Dendritic cell treated with granulocyte-macrophage colony-stimulating factor and Interleukin-4, amounts not matched to agents 40 ng/mL and 50 ng/mL, for 4 days (primary cell): ENCODE measurements at regions of chr11 and their contacts with region 1.

Region 1: DNA sequence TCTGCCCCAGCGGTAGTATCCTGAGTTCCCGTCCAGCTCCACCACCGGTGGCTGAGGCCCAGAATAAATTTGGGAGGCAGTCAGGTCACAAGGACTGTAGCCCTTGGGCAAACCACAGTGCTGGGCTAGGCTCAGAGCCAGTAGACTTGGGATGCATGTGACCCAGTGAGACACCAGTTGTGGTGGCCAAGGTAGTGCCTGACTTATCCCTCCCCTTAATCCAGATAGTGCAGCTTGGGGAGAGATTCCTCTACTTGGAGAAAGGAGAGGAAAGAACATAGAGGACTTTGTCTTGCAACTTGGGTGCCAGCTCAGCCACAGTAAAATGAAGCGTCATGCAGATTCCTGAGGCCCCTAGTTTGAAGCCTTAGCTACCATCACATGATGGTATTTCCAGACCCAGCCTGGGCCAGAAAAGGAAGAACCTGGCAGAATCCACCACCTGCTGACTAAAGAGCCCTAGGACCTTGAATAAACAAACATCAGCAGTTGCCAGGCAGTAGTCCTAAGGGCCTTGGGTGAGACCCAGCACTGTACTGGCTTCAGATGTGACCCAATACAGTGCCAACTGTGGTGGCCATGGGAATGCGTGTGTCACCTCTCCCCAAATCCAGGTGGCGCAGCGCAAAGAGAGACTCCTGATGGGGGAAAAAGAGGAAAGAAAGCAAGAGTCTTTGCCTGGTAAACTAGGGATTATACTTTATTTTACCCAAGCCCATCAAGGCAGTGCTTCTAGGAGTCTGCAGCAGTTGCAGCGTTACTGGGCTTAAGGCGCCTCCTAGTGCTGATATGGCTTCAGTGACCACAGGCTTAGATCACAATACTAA is 17.0 kb upstream of the DDX10 start:
- H3K4me3 Mint-ChIP-seq: no peak overlapping the region
- H3K27ac Mint-ChIP-seq: no peak overlapping the region
- H3K4me1 Mint-ChIP-seq: no peaks in the 10 kb centered on the region
- H3K27me3 Mint-ChIP-seq: no peaks in the 10 kb centered on the region

Region 2: GRCh38 chr11:108121274-108122155 is 526.4 kb before region 1 on chr11 and contains the start of gene ACAT1:
- intact Hi-C with region 1: loop called (anchors 5 kb)
- H3K4me3 Mint-ChIP-seq: peak within 1 kb of the TSS; percentile 79
- H3K27ac Mint-ChIP-seq: peak within 1 kb of the TSS; percentile 63
- H3K4me1 Mint-ChIP-seq: peaks cover 46% of the 10 kb centered on the region
- H3K27me3 Mint-ChIP-seq: no peaks in the 10 kb centered on the region

Region 3: DNA sequence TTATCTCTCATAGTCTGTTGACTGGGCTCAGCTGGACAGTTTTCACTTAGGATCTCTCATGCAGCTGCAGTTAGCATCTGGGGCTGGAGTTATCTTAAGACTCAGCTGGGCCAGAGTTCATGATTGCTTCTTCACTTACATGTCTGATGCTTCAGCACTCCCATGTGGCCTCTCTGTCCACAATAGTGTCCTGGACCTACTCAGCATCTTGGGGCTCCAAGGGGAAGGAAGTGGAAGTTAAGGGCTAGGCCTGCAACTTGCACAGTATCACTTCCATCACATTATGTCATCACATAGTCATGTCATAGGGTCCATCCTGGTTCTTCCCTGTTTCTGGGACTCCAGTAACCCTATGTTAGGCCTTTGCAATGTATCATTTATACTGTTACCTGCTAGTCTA is 296.5 kb before region 1 on chr11:
- intact Hi-C with region 1: loop called (anchors 5 kb)
- H3K4me3 Mint-ChIP-seq: no peak overlapping the region
- H3K27ac Mint-ChIP-seq: no peak overlapping the region
- H3K4me1 Mint-ChIP-seq: peaks cover 7% of the 10 kb centered on the region
- H3K27me3 Mint-ChIP-seq: no peaks in the 10 kb centered on the region

Region 4: GRCh38 chr11:108414958-108415357 is 233.0 kb before region 1 on chr11:
- intact Hi-C with region 1: loop called (anchors 1 kb)
- H3K4me3 Mint-ChIP-seq: no peak overlapping the region
- H3K27ac Mint-ChIP-seq: no peak overlapping the region
- H3K4me1 Mint-ChIP-seq: no peaks in the 10 kb centered on the region
- H3K27me3 Mint-ChIP-seq: no peaks in the 10 kb centered on the region

Region 5: DNA sequence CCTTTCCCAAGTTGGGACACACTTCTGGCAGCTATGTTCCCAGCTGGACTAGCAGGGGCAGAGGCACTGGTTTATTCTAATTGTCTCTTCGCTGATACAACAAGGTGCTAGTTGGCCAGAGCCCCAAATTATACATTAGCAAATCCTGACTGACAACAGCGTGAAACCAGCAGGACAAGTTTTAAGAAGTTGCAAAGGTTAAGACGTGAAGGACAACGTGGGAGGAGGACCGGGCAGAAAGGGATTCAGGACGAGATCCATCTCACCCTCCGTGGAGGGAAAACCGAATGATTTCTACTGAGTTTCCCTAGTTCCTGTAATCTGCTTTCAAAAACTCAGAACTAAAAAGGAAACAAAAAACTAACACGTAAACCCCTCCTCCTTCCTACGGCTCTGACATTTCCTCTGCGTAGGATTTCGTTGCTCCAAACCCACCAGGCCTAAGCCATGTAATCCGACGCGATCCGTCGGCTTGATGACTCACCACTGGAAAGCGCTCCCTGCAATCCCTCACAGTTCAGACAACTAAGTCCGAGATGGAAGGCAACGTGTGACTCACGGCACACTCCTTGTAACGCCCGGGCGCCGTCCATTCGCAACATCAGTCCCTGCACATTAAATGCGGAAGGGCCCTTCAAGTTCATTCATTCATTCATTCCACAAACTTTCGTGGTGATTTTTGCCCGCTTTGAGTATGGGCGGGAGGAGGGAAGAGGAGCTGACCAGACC is 150.4 kb before region 1 on chr11:
- intact Hi-C with region 1: loop called (anchors 10 kb)
- H3K4me3 Mint-ChIP-seq: peak overlapping the region; percentile 90
- H3K27ac Mint-ChIP-seq: peak overlapping the region; percentile 96
- H3K4me1 Mint-ChIP-seq: peaks cover 18% of the 10 kb centered on the region
- H3K27me3 Mint-ChIP-seq: no peaks in the 10 kb centered on the region